A549 (cell line): ENCODE measurements at regions of chr20 and their contacts with region 1.

Region 1: GRCh38 chr20:43537921-43538877 is 20.6 kb upstream of the SGK2 start:
- DNase-seq: peak; percentile 49 to 63
- ATAC-seq: peak; percentile 78 to 91
- H3K4me3 ChIP-seq: no peak overlapping the region
- H3K27ac ChIP-seq: 0 out of 6 replicates have a peak overlapping the region, but pooled peaks of 1 of the 2 experiments have one; percentile 20
- H3K4me1 ChIP-seq: peaks cover 7% of the 10 kb centered on the region; the same call in 2 of the 3 replicates
- CTCF ChIP-seq: peak; percentile 92
- EP300 ChIP-seq: no peak
- POLR2A ChIP-seq: no peak
- RAD21 ChIP-seq: peak; percentile 91 to 95

Region 2: DNA sequence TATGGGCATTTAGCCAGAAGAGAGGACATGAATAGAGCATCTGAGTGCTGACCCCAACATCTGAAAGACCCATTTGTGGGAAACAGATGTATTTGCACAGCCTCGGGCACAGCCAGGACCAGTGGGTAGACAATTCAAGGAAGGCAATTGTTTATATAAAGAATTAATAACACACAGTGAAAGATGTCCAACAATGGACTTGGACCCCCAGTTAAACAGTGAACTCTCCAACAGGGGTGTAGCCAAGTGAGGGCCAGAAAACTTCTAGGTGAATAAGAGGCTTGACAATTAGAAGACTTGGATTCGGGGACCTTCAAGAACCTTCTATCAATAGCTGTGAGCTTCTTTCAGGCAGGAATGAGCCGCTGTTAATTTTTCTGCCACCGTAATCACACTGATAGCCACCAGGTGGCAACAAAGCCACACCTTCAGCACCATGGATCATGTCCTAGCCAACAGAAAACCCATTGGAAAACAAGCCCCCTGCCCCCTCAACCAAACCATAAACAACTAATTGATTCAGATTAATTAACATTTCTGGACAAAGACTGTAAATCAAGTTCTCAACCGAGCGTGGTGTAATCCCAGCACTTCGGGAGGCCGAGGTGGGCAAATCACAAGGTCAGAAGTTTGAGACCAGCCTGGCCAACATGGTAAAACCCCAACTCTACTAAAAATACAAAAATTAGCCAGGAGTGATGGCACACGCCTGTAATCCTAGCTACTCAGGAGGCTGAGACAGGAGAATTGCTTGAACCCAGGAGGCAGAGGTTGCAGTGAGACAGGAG is 89.3 kb before region 1 on chr20:
- CTCF ChIA-PET with region 1: interaction called, 16 read pairs
- POLR2A ChIA-PET with region 1: no interaction called
- DNase-seq: peak; percentile 56 to 72
- ATAC-seq: peak; percentile 82 to 85
- H3K4me3 ChIP-seq: no peak overlapping the region
- H3K27ac ChIP-seq: no peak overlapping the region
- H3K4me1 ChIP-seq: 0 out of 3 replicates have a peak, but pooled peaks cover 3% of the 10 kb centered on the region
- CTCF ChIP-seq: peak; percentile 83
- EP300 ChIP-seq: no peak
- POLR2A ChIP-seq: no peak
- RAD21 ChIP-seq: peak; percentile 87 to 88

Region 3: GRCh38 chr20:43549416-43550065 is 11.3 kb after region 1 on chr20:
- CTCF ChIA-PET with region 1: interaction called, 27 read pairs
- POLR2A ChIA-PET with region 1: no interaction called
- DNase-seq: no peak
- ATAC-seq: no peak
- H3K4me3 ChIP-seq: no peak overlapping the region
- H3K27ac ChIP-seq: no peak overlapping the region
- H3K4me1 ChIP-seq: no peaks in the 10 kb centered on the region
- CTCF ChIP-seq: no peak
- EP300 ChIP-seq: no peak
- POLR2A ChIP-seq: no peak
- RAD21 ChIP-seq: no peak

Region 4: GRCh38 chr20:43570496-43570895 is 32.3 kb after region 1 on chr20:
- CTCF ChIA-PET with region 1: interaction called, 32 read pairs
- POLR2A ChIA-PET with region 1: no interaction called
- DNase-seq: no peak
- ATAC-seq: no peak
- H3K4me3 ChIP-seq: no peak overlapping the region
- H3K27ac ChIP-seq: no peak overlapping the region
- H3K4me1 ChIP-seq: no peaks in the 10 kb centered on the region
- CTCF ChIP-seq: no peak
- EP300 ChIP-seq: no peak
- POLR2A ChIP-seq: no peak
- RAD21 ChIP-seq: no peak

Region 5: GRCh38 chr20:43590392-43591323 is 52.5 kb after region 1 on chr20 and contains the start of gene IFT52:
- CTCF ChIA-PET with region 1: interaction called, 109 read pairs
- POLR2A ChIA-PET with region 1: interaction called, 3 read pairs
- DNase-seq: peak; percentile 84 to 93
- ATAC-seq: peak; percentile 99
- H3K4me3 ChIP-seq: peak within 1 kb of the TSS; percentile 71
- H3K27ac ChIP-seq: peak within 1 kb of the TSS; percentile 82 to 86
- H3K4me1 ChIP-seq: peaks cover 18% of the 10 kb centered on the region; the same call in 2 of the 3 replicates
- CTCF ChIP-seq: no peak
- EP300 ChIP-seq: no peak
- POLR2A ChIP-seq: peak; percentile 84
- RAD21 ChIP-seq: 0 out of 5 replicates have a peak, but pooled peaks of 1 of the 2 experiments have one; percentile 3
- polyA plus RNA-seq, gene IFT52: 42.2 and 49.0 TPM in 2 replicates

Region 6: GRCh38 chr20:43691928-43692524 is 153.8 kb after region 1 on chr20:
- CTCF ChIA-PET with region 1: interaction called, 91 read pairs
- POLR2A ChIA-PET with region 1: no interaction called
- DNase-seq: peak; percentile 61 to 64
- ATAC-seq: peak; percentile 84 to 89
- H3K4me3 ChIP-seq: no peak overlapping the region
- H3K27ac ChIP-seq: no peak overlapping the region
- H3K4me1 ChIP-seq: no peaks in the 10 kb centered on the region
- CTCF ChIP-seq: peak; percentile 71
- EP300 ChIP-seq: no peak
- POLR2A ChIP-seq: no peak
- RAD21 ChIP-seq: peak; percentile 75 to 77

Region 7: DNA sequence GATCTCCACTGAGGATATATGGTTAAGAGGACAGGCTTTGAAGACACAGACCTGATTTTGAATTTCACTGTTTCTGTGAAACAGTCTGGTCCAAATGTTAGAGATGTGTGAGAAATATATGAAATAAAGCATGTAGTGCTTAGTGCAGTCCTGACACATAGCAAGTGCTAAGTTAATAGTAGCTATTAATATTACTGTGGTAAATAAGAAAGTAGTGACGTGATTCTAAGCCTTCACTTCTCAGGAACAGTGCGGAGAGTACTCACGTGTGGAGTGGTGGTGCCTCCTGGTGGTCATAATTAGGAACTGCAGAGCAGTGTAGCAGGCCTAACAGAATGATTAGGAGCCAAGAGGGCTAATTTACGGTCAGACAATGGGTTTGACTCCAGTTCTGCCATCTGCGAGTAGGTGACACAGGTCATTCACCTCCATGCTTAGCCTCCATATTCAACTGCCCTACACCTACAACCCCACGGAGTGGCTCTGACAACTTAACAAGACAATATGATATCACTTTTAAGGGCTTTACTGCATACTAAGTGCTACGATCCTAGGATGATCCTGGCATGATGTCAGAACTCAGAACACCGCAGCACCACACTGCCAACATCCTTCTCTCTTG is 542.6 kb after region 1 on chr20:
- CTCF ChIA-PET with region 1: interaction called, 13 read pairs
- POLR2A ChIA-PET with region 1: no interaction called
- DNase-seq: peak; percentile 77 to 85
- ATAC-seq: peak; percentile 91 to 98
- H3K4me3 ChIP-seq: no peak overlapping the region
- H3K27ac ChIP-seq: peak overlapping the region in 1 of 2 experiments; percentile 16; a peak in 1 of 6 replicates
- H3K4me1 ChIP-seq: no peaks in the 10 kb centered on the region
- CTCF ChIP-seq: peak; percentile 96
- EP300 ChIP-seq: no peak
- POLR2A ChIP-seq: no peak
- RAD21 ChIP-seq: peak; percentile 98 to 99